ENCODE measurements at regions of chr10 and their contacts with region 1.

Region 1: GRCh38 chr10:11539191-11539868 is 72.1 kb downstream of the USP6NL start:
- DNase-seq: no peak
- H3K4me3 Mint-ChIP-seq: no peak overlapping the region
- H3K27ac Mint-ChIP-seq: no peak overlapping the region
- H3K4me1 Mint-ChIP-seq: peaks cover 9% of the 10 kb centered on the region
- H3K27me3 Mint-ChIP-seq: peaks cover 12% of the 10 kb centered on the region

Region 2: DNA sequence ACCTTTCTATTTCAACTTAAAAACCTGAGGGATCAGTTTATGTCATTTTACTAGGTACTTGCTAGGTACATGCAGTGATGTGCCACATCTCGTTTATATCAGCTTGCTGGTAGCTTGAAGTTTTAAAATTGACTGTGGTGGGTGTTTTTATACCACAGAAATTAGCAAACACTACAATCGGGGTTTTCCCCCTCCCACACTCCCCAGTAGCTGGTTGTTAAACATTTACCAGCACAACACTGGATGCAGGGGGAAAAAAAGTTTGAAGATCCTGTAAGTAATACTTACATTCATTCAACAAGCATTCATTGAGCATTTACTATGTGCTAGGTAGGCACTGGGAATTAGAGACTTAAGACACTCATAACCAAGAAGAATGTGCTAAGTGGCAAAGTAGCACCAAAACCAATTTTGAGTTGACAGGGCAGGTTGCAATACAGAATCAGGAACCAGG is 39.5 kb after region 1 on chr10:
- intact Hi-C with region 1: loop called (anchors 1 kb)
- DNase-seq: no peak
- H3K4me3 Mint-ChIP-seq: no peak overlapping the region
- H3K27ac Mint-ChIP-seq: no peak overlapping the region
- H3K4me1 Mint-ChIP-seq: peaks cover 22% of the 10 kb centered on the region
- H3K27me3 Mint-ChIP-seq: peaks cover 11% of the 10 kb centered on the region

Region 3: DNA sequence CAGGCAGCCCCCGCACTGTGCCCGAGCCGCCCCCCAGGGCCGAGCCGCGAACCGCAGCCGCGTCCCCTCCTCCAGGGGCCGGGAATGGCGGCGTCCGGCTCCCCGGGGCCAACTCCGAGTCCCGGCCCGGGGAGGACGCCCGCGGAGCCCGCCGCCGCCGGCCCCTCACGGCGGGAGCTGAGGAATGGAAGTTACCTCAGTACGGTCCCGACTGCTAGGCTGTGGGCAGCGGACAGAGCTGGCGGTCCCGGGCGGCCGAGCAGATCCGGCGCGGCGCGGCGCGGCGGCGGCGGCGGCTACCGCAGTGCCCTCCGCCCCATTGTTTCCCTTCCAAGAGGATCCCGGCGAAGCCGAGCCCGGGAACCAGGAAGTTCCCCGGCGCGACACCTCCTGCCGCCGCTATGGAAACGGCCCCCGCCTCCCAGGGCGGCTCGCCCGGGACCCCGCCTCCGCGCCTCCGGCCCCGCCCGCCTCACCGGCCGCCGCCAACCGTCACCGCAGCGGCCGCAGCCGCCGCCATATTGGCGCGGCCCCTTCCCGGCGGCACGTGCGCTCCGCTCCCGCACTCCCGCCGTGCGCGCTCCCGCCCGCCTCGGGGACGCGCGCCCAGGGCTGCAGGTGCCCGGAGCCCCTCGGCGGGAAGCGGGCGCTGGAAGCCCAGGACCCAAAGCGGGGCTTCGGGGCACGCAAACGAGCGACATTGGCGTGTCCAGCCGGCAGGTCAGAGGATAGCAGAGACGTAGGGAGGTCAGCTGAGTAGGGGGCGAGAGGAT is 72.1 kb after region 1 on chr10 and contains the start of gene USP6NL:
- intact Hi-C with region 1: loop called (anchors 5 kb)
- DNase-seq: peak; percentile 48
- H3K4me3 Mint-ChIP-seq: peak within 1 kb of the TSS; percentile 89
- H3K27ac Mint-ChIP-seq: peak within 1 kb of the TSS; percentile 52
- H3K4me1 Mint-ChIP-seq: peaks cover 27% of the 10 kb centered on the region
- H3K27me3 Mint-ChIP-seq: peaks cover 44% of the 10 kb centered on the region
- total RNA-seq, gene USP6NL: 0.64 and 0.78 TPM in 2 replicates

Region 4: DNA sequence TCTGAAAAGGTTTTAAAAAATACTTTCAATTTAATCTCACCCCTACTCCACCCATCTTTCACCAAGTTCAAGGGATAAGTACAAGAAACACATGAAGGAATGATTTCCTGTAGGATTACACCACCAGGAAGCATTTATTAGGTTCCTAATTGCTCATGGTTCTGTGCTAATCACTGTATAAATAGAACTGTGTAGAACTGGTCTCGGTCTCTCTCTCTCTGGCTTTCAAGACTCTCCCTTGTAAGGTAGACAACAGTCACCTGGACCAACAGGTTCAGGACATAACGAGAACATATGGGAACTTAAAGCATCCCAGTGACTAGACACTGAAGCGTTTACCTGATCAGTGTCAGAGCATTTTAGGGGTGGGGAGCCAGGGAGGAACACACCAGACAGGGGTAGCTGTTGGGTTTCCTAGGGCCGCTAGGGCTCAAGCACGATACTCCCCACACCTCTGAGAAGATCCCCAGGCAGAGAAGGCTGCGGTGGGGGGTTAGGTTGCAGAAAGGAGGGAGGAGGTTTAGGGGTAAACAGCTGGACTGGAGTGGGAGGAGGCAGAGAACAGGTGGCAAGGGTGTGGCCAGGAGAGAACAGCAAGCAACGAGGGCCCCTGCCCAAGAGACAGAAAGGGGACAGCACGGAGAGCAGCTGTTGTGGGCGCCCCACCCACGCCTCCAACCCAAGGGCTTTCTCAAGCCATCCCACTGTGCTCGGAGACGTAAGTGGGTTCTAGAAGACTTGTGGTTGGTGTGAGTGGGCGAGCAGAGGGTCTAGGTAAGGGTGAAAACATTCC is 124.6 kb after region 1 on chr10:
- intact Hi-C with region 1: no loop called
- DNase-seq: no peak
- H3K4me3 Mint-ChIP-seq: no peak overlapping the region
- H3K27ac Mint-ChIP-seq: no peak overlapping the region
- H3K4me1 Mint-ChIP-seq: peaks cover 1% of the 10 kb centered on the region
- H3K27me3 Mint-ChIP-seq: peaks cover 15% of the 10 kb centered on the region

Measured in activated T-helper 1 cell treated with anti-CD3 and anti-CD28 coated beads, Interleukin-12 subunit alpha, Interleukin-12 subunit beta, Interleukin-2, Interleukin-4 antibody, amounts not matched to agents 30 ng/mL and 10 ng/mL and 1 ng/mL, durations not matched to agents 14 hours and 24 hours and 36 hours (primary cell).